Activated CD4-positive, alpha-beta memory T cell treated with anti-CD3 and anti-CD28 coated beads for 36 hours (primary cell): ENCODE measurements at regions of chr2 and their contacts with region 1.

Region 1: GRCh38 chr2:61328707-61329251 is 142.1 kb downstream of the USP34 start:
- DNase-seq: no peak
- H3K4me3 Mint-ChIP-seq: no peak overlapping the region
- H3K27ac Mint-ChIP-seq: peak overlapping the region; percentile 73
- H3K4me1 Mint-ChIP-seq: peaks cover 19% of the 10 kb centered on the region
- H3K27me3 Mint-ChIP-seq: no peaks in the 10 kb centered on the region

Region 2: DNA sequence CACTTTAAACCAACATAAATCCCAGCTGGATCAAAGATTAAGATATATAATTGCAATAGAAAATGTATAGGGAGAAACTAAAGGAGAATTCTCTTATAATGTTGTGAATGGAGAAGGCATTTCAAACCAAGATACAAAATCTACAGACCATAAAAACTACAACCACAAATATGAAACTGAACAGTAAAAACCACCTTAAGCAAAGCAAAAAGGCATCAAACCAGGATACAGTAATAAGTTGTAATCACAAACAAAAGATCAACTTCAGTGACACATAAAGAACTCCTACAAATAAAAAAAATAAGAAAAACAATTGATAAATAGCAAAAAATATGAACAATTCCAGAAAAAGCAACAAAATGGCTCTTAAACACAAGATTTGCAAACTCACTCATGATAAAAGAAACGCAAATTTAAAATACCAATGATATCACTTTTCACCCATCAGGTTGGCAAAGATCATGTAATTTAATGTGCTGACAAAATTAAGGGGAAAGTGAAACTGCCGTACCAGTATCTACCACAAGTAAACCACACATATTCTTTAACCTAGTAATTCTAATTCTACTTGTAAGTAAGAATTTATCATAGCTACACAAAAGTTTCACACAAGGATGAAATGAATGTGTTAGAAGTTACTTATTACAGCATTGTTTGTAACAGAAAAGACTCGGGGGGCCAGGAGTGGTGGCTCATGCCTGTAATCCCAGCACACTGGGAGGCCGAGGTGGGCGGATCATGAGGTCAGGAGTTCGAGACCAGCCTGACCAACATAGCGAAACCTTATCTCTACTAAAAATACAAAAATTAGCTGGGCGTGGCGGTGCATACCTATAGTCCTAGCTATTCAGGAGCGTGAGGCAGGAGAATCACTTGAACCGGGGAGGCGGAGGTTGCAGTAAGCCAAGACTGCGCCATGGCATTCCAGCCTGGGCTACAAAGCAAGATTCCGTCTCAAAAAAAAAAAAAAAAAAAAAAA is 40.2 kb after region 1 on chr2:
- CTCF ChIA-PET with region 1: no interaction called
- POLR2A ChIA-PET with region 1: interaction called, 4 read pairs
- intact Hi-C with region 1: loop called (anchors 5 kb)
- DNase-seq: peak; percentile 51
- H3K4me3 Mint-ChIP-seq: no peak overlapping the region
- H3K27ac Mint-ChIP-seq: peak overlapping the region; percentile 51
- H3K4me1 Mint-ChIP-seq: peaks cover 36% of the 10 kb centered on the region
- H3K27me3 Mint-ChIP-seq: no peaks in the 10 kb centered on the region